Activated T-helper 2 cell treated with anti-CD3 and anti-CD28 coated beads, Interferon-gamma antibody, Interleukin-2, Interleukin-4, amounts not matched to agents 10 μg/mL and 5 μg/mL and 100 μg/mL, durations not matched to agents 14 hours and 24 hours and 36 hours (primary cell): ENCODE measurements at regions of chr4 and their contacts with region 1.

Region 1: DNA sequence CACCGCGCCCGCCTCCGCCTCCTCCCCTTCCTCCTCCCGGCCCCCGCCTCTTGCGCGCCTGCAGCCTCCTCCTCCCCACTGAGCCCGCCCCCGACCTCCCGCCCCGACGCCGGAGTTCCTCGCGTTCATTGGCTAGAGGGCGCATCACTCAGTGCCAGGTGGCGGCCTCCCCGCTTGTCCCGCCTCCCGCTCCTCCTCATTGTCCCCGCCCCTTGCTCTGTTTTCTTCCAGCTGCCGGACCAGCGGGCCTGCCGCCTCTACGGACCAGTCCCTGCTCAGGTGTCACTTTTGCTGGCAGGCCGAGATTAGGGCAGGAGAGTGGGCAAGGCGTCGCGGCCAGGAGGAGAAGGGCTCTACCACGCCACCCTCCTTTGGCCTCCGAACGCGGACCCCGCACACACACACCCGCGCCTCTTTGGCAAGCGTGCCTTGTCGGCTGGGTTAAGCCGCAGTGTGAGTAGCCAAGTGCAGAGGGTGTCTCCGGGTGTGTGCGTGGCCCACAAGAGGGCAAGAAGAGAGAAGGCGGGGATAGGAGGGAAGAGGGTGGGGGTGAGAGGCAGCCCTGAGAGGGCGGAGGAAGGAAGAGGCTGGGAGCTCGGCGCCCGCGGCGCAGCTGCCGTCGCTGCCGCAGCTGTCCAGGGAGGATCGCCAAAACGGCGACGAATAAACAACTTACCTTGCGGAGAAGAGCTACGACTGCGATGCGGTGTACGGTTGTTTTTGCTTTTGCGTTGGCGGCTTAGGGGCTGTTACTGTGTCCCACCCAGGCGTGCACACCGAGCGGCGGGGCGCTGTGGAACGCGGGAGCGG is 436 bp upstream of the PPP3CA start:
- DNase-seq: peak; percentile 96
- H3K4me3 Mint-ChIP-seq: peak overlapping the region; percentile 87
- H3K27ac Mint-ChIP-seq: peak overlapping the region; percentile 72
- H3K4me1 Mint-ChIP-seq: peaks cover 31% of the 10 kb centered on the region
- H3K27me3 Mint-ChIP-seq: peaks cover 41% of the 10 kb centered on the region

Region 2: DNA sequence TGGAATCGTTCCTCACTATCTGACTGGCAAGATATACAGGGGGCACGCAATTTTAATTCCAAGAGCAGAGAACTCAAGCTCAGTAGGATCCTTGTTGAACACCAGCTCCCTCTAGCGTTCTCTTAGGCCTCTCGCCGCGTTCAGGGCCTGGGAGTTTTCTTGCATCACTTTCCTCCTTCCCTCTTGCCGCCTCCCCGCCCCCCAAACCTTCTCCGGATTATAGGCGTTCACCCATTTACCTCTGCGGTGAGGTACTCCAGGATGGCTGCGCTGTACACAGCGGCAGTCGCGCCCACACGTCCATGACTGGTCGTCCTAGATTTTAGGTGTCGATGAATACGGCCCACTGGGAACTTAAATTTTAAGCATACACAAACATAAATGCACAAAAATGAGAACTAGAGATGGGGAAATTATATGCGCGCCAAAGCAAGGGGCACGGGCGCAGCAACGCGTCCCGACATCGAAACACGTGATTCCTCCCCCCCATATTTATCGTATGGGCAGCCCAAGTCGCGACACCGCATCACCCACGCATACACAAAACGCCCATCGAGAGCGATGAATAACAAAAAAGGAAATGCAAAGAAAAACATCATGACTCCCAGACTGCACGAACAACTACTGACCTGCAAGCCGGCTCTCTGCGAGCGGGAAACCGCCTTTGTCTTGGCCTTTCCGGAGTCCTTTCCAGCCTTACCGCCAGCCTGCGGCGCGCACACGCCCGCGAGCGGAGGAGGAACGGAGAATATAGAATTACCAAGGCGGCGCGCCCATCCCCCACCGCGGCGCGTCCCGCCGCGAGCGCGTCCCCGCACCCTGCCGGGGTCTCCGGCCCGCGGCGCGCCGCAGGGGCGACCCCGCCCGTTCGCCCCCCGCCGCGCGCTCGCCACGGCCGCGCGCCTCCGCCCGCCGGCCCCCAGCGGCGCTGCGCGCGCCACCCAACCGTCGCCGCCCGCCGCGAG is 1398.4 kb before region 1 on chr4:
- intact Hi-C with region 1: loop called (anchors 5 kb)
- DNase-seq: peak; percentile 87
- H3K4me3 Mint-ChIP-seq: no peak overlapping the region
- H3K27ac Mint-ChIP-seq: no peak overlapping the region
- H3K4me1 Mint-ChIP-seq: peaks cover 31% of the 10 kb centered on the region
- H3K27me3 Mint-ChIP-seq: no peaks in the 10 kb centered on the region

Region 3: GRCh38 chr4:101169044-101170014 is 178.4 kb before region 1 on chr4:
- intact Hi-C with region 1: loop called (anchors 5 kb)
- DNase-seq: peak; percentile 32
- H3K4me3 Mint-ChIP-seq: no peak overlapping the region
- H3K27ac Mint-ChIP-seq: no peak overlapping the region
- H3K4me1 Mint-ChIP-seq: peaks cover 2% of the 10 kb centered on the region
- H3K27me3 Mint-ChIP-seq: no peaks in the 10 kb centered on the region

Region 4: GRCh38 chr4:101328063-101328602 is 19.6 kb before region 1 on chr4:
- intact Hi-C with region 1: loop called (anchors 1 kb)
- DNase-seq: no peak
- H3K4me3 Mint-ChIP-seq: peak overlapping the region; percentile 46
- H3K27ac Mint-ChIP-seq: peak overlapping the region; percentile 88
- H3K4me1 Mint-ChIP-seq: peaks cover 34% of the 10 kb centered on the region
- H3K27me3 Mint-ChIP-seq: peaks cover 24% of the 10 kb centered on the region

Region 5: GRCh38 chr4:101527188-101527587 is 179.4 kb after region 1 on chr4:
- intact Hi-C with region 1: loop called (anchors 5 kb)
- DNase-seq: peak; percentile 32
- H3K4me3 Mint-ChIP-seq: no peak overlapping the region
- H3K27ac Mint-ChIP-seq: no peak overlapping the region
- H3K4me1 Mint-ChIP-seq: peaks cover 21% of the 10 kb centered on the region
- H3K27me3 Mint-ChIP-seq: peaks cover 36% of the 10 kb centered on the region

Region 6: DNA sequence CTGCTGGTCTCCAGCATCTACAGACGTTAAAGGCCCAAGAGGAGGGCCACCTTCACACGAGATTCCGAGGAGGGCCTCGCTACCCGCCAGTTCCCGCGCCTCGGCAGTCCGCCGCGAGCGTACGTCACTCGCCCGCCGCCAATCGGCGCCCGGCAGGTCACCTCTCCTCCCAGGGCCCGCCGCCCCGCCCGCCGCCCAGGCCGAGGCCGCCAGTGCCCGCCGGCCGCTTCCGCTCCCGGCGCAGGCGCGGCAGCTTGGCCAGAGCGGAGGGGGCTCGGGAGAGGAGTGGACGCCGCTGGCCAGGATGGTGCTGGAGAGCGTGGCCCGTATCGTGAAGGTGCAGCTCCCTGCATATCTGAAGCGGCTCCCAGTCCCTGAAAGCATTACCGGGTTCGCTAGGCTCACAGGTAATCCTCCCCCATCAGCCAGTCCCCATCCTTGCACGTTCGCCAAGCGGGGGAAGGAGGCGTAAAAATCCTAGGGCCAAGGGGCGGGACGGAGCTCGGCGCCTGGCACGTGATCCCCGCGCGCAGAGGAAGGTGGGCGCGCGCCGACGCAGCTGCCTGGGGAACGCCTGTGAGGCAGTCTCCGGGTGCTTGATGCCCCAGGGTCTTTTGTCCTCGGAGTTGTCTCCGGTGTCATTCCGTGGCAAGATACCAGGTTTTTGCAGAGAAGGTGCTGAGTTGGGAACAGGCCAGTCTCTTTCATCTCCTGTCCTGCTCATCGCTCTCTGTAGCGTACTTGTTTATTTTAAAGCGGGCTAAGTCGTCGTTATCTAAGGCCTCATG is 1521.2 kb after region 1 on chr4 and contains the start of gene CISD2:
- intact Hi-C with region 1: loop called (anchors 2 kb)
- DNase-seq: peak; percentile 93
- H3K4me3 Mint-ChIP-seq: peak within 1 kb of the TSS; percentile 90
- H3K27ac Mint-ChIP-seq: peak within 1 kb of the TSS; percentile 99
- H3K4me1 Mint-ChIP-seq: peaks cover 48% of the 10 kb centered on the region
- H3K27me3 Mint-ChIP-seq: no peaks in the 10 kb centered on the region
- total RNA-seq, gene CISD2: 50.8 and 51.4 TPM in 2 replicates